CD4-positive, alpha-beta T cell (primary cell): ENCODE measurements at regions of chr19 and their contacts with region 1.

Region 1: DNA sequence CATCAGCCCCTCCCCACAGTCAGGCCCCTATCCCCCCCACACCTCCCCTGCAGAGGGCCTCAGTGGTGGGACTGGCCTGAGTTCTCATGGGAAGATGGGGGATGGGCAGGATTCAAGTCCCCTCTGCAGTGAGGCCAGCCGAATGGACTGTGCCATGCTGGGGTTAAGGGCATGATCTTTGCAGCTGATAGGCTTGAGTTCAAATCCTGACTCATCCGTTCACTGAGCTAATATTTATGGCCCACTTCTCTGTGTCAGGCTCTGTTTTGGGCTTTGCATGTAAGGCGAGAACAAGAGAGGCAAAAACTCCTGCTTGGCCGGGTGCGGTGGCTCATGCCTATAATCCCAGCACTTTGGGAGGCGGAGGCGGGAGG is 20.7 kb downstream of the MARK4 start:
- DNase-seq: no peak
- ATAC-seq: no peak
- H3K4me3 ChIP-seq: no peak overlapping the region
- H3K4me3 Mint-ChIP-seq: no peak overlapping the region
- H3K27ac ChIP-seq: no peak overlapping the region
- H3K27ac Mint-ChIP-seq: no peak overlapping the region
- H3K4me1 ChIP-seq: no peaks in the 10 kb centered on the region
- H3K4me1 Mint-ChIP-seq: no peaks in the 10 kb centered on the region
- H3K27me3 ChIP-seq: no peaks in the 10 kb centered on the region
- H3K27me3 Mint-ChIP-seq: no peaks in the 10 kb centered on the region
- CTCF ChIP-seq: no peak

Region 2: DNA sequence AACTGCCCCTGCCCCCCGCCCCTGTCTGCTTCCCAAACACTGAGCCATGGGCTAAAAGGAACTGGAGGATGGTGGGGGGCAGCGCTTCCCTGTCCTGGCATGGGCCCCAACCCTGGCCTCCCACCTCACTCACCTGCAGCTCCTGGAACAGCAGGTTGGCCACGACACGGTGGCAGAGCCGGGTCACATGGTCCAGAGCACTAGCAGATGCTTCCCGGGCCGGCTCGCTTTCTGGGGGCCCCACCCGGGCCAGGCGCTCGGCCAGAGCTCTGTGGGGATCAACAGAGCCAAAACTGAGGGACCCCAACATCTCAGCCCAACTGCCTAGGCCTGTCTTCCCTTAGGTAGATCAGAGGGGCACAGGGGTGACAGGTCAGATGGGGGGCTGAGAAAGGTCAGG is 47.1 kb before region 1 on chr19:
- CTCF ChIA-PET with region 1: no interaction called
- POLR2A ChIA-PET with region 1: no interaction called
- intact Hi-C with region 1: loop called in 1 of 2 experiments (anchors 5 kb)
- DNase-seq: no peak
- ATAC-seq: no peak
- H3K4me3 ChIP-seq: no peak overlapping the region
- H3K4me3 Mint-ChIP-seq: no peak overlapping the region
- H3K27ac ChIP-seq: no peak overlapping the region
- H3K27ac Mint-ChIP-seq: no peak overlapping the region
- H3K4me1 ChIP-seq: no peaks in the 10 kb centered on the region
- H3K4me1 Mint-ChIP-seq: no peaks in the 10 kb centered on the region
- H3K27me3 ChIP-seq: peaks cover 2 to 5% of the 10 kb centered on the region in 2 experiments
- H3K27me3 Mint-ChIP-seq: peaks cover 33% of the 10 kb centered on the region
- CTCF ChIP-seq: no peak

Region 3: GRCh38 chr19:45296355-45296754 is 24.6 kb after region 1 on chr19:
- CTCF ChIA-PET with region 1: no interaction called
- POLR2A ChIA-PET with region 1: no interaction called
- intact Hi-C with region 1: no loop called
- DNase-seq: peak in 3 of 14 experiments; percentile 7 to 36 (median 15)
- ATAC-seq: no peak
- H3K4me3 ChIP-seq: no peak overlapping the region
- H3K4me3 Mint-ChIP-seq: no peak overlapping the region
- H3K27ac ChIP-seq: no peak overlapping the region
- H3K27ac Mint-ChIP-seq: no peak overlapping the region
- H3K4me1 ChIP-seq: no peaks in the 10 kb centered on the region
- H3K4me1 Mint-ChIP-seq: no peaks in the 10 kb centered on the region
- H3K27me3 ChIP-seq: no peaks in the 10 kb centered on the region
- H3K27me3 Mint-ChIP-seq: no peaks in the 10 kb centered on the region
- CTCF ChIP-seq: no peak

Region 4: DNA sequence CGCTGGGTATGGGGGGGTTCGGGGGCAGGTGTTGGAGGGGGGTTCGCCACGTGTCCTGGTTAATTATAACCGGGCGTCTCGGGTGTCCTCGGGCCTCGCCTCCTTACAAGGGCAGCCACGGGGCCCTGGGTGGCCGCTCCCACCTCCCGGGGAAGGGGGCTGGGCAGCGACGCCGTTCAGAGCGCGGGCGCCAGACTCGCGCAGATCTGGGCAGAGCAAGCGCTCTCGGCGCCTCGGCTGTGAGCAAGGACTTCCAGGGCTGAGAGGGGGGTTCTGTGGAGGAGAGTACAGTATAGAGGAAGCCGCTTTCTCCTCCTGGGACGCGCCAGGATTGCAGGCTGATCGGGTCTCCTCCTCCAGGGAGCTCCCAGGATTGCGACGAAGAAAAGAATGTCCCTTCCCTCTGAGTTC is 52.0 kb after region 1 on chr19:
- CTCF ChIA-PET with region 1: no interaction called
- POLR2A ChIA-PET with region 1: no interaction called
- intact Hi-C with region 1: no loop called
- DNase-seq: no peak
- ATAC-seq: no peak
- H3K4me3 ChIP-seq: no peak overlapping the region
- H3K4me3 Mint-ChIP-seq: no peak overlapping the region
- H3K27ac ChIP-seq: no peak overlapping the region
- H3K27ac Mint-ChIP-seq: no peak overlapping the region
- H3K4me1 ChIP-seq: peaks cover 6% of the 10 kb centered on the region
- H3K4me1 Mint-ChIP-seq: no peaks in the 10 kb centered on the region
- H3K27me3 ChIP-seq: peaks cover 19 to 38% of the 10 kb centered on the region in 2 experiments
- H3K27me3 Mint-ChIP-seq: peaks cover 21% of the 10 kb centered on the region
- CTCF ChIP-seq: no peak